Motor neuron (in vitro differentiated cells): ENCODE measurements at regions of chrX and their contacts with region 1.

Region 1: DNA sequence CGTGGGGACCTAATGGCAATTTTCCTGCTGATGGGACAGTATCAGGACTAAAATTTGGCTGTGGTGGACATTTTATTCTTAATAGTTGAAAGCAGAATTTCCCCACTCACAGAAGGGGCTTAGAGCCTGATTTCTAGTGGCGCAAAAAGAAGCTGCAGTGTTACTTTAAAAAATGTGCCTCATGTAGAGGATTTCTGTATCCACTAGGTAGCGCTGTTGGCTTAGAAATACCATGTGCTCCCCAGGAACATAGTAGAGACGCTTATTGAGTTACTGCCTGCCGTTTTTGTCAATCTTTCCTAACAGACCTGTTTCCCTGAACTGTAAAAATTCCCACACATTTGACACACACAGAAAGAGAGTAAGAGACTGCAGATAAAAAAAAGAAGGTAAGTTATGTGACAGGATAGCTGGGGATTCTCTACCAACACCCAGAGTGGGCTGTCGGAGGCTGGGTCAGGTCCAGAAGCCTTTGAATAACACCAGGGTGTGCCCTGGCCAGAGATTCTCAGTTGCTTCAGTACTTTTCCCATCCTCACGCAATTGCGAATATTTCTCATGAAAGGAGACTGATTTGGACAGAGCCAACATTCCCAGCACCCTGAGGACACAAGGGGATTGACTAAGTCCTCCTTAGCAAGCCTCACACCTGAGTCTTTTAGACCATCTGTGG is 88.4 kb downstream of the ZXDA start:
- ATAC-seq: peak in 5 of 8 experiments; percentile 43 to 96 (median 94)
- H3K4me3 ChIP-seq: no peak overlapping the region
- H3K27ac ChIP-seq: no peak overlapping the region
- H3K4me1 ChIP-seq: no peaks in the 10 kb centered on the region

Region 2: DNA sequence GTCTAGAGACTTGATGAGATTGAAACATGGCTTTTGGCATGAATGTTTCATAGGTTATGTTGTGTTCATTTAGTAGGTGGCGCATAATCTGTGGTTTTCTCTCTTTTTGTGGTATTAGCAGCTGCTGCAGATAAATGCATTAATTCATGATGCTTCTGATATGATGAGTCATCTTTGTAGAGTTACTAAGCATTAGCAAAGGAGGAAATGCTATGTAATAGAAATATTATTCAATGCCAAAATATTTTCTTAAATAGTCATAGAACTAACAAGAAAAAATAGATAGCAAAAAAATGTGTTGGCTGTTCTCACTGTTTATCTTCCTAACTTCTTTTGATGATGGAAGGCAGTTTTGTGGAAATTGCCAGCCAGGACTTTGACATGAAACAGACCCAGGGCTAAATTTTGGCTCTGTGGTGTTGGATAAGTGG is 226.4 kb before region 1 on chrX:
- in situ Hi-C with region 1: loop called in 1 of 9 experiments (anchors 25 kb)
- ATAC-seq: no peak
- H3K4me3 ChIP-seq: peak overlapping the region; percentile 5 to 30 (median 19)
- H3K27ac ChIP-seq: no peak overlapping the region
- H3K4me1 ChIP-seq: peaks cover 7 to 18% of the 10 kb centered on the region in 2 donors

Region 3: GRCh38 chrX:57929373-57929772 is 107.5 kb after region 1 on chrX:
- in situ Hi-C with region 1: loop called in 1 of 9 experiments (anchors 25 kb)
- ATAC-seq: peak in 4 of 8 experiments; percentile 27 to 80 (median 65)
- H3K4me3 ChIP-seq: no peak overlapping the region
- H3K27ac ChIP-seq: no peak overlapping the region
- H3K4me1 ChIP-seq: no peaks in the 10 kb centered on the region

Region 4: DNA sequence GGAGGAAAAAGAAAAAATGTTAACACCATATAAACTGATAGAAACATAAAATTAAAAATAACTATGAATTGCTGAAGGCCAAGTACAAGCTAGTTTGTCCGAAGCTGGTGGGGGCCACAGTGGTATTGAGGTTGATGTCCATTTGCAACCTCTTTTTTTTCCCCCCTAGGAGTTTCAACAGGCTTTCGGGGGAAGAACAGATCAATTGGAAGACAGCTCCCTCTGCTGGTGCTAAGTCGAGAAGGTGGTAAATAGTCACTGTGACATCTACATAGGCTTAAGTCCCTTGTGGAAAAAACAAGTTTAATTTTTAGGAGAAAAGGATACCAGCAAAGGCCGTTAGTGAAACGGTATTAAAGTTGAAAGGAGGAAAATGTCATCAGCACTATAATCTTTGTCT is 204.1 kb after region 1 on chrX:
- in situ Hi-C with region 1: no loop called
- ATAC-seq: peak in 2 of 8 experiments; percentile 31 to 38
- H3K4me3 ChIP-seq: no peak overlapping the region
- H3K27ac ChIP-seq: no peak overlapping the region
- H3K4me1 ChIP-seq: no peaks in the 10 kb centered on the region